ENCODE measurements at regions of chr7 and their contacts with region 1.

Region 1: DNA sequence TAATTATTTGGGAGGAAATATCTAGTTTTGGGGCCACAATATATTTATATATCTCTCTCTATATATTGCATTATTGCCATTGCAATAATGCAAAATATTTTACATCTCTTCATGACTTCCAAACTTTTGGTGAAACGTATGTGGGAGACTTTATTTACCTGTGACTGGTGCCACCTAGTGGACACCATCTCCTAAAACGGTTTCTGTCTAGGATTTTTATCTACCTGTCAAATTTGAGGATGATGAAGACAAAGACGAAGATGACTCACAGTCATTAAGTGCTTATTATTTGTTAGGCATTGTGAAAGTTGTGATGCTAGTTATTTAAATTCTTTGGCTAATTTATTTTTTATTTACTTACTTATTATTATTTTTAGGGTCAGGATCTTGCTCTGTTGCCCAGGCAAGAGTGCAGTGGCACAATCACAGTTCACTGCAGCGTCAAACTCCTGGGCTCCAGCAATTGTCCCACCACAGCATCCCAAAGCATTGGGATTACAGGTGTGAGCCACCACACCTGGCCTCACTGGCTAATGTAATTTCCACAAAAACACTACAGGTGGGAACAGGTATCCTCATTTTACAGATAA is 18.7 kb upstream of the CBLL1 start:
- DNase-seq: peak in 3 of 6 donors; percentile 4 to 45 (median 22)
- ATAC-seq: peak; percentile 46 to 73 (median 68)
- H3K4me3 ChIP-seq: no peak overlapping the region
- H3K27ac ChIP-seq: no peak overlapping the region
- H3K4me1 ChIP-seq: no peaks in the 10 kb centered on the region
- H3K27me3 ChIP-seq: no peaks in the 10 kb centered on the region
- CTCF ChIP-seq: peak; percentile 24 to 68 (median 41)

Region 2: GRCh38 chr7:106806556-106806955 is 918.7 kb before region 1 on chr7:
- intact Hi-C with region 1: loop called in 1 of 3 experiments (anchors 10 kb)
- DNase-seq: no peak
- ATAC-seq: no peak
- H3K4me3 ChIP-seq: no peak overlapping the region
- H3K27ac ChIP-seq: no peak overlapping the region
- H3K4me1 ChIP-seq: no peaks in the 10 kb centered on the region
- H3K27me3 ChIP-seq: no peaks in the 10 kb centered on the region
- CTCF ChIP-seq: no peak

Region 3: GRCh38 chr7:107327957-107328569 is 397.2 kb before region 1 on chr7:
- intact Hi-C with region 1: no loop called
- DNase-seq: no peak
- ATAC-seq: no peak
- H3K4me3 ChIP-seq: no peak overlapping the region
- H3K27ac ChIP-seq: no peak overlapping the region
- H3K4me1 ChIP-seq: peaks cover 0 to 7% (median 0%) of the 10 kb centered on the region in 3 donors
- H3K27me3 ChIP-seq: no peaks in the 10 kb centered on the region
- CTCF ChIP-seq: no peak

Region 4: GRCh38 chr7:107462740-107463444 is 262.4 kb before region 1 on chr7:
- intact Hi-C with region 1: loop called in 2 of 3 experiments (anchors 5 kb)
- DNase-seq: peak in 5 of 6 donors; percentile 37 to 60 (median 41)
- ATAC-seq: peak; percentile 88 to 99 (median 98)
- H3K4me3 ChIP-seq: no peak overlapping the region
- H3K27ac ChIP-seq: no peak overlapping the region
- H3K4me1 ChIP-seq: no peaks in the 10 kb centered on the region
- H3K27me3 ChIP-seq: no peaks in the 10 kb centered on the region
- CTCF ChIP-seq: peak in 3 of 4 donors; percentile 40 to 50 (median 46)

Region 5: GRCh38 chr7:107469929-107470328 is 255.3 kb before region 1 on chr7 and contains the start of gene GPR22:
- intact Hi-C with region 1: loop called in 1 of 3 experiments (anchors 5 kb)
- DNase-seq: no peak
- ATAC-seq: no peak
- H3K4me3 ChIP-seq: no peak within 1 kb of the TSS
- H3K27ac ChIP-seq: no peak within 1 kb of the TSS
- H3K4me1 ChIP-seq: no peaks in the 10 kb centered on the region
- H3K27me3 ChIP-seq: no peaks in the 10 kb centered on the region
- CTCF ChIP-seq: no peak
- total RNA-seq, gene GPR22: not detected

Region 6: GRCh38 chr7:107570298-107570697 is 154.9 kb before region 1 on chr7:
- intact Hi-C with region 1: no loop called
- DNase-seq: no peak
- ATAC-seq: no peak
- H3K4me3 ChIP-seq: no peak overlapping the region
- H3K27ac ChIP-seq: no peak overlapping the region
- H3K4me1 ChIP-seq: peaks cover 0 to under 1% (median 0%) of the 10 kb centered on the region in 3 donors
- H3K27me3 ChIP-seq: no peaks in the 10 kb centered on the region
- CTCF ChIP-seq: no peak

Region 7: DNA sequence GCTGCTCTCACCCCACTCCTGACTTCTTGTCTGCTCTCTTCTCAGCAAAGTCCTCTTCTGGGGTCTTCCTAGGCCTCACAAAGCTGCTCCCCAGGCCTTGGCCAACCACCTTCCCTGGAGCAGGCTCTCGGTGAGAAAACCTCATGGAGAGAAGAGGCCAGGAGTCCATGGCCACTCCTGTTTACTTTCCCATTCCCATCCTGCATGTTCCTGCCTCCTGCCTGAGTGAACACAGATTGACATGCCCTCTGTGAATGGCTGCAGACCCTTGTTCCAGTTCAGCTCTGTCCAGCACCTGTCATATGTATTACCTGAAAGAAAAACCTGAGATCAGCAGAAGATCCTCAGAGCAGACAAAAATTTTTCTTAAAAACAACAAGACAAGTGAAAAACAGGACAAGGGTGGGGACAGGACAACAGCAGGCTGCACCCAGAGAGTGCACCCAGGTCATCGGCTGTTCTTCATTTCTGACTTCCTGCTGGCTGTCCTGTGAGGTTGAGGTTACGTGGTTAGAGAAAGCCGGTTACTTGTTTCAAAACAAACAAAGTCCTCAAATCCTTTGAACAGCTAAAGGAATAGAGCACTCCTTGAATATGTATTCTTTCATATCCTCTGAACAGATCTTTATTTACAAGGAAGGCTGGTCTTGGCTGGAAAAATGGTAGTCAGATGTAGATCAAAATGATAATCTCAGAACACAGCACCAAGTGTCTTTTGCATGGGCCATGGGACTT is 131.7 kb after region 1 on chr7:
- intact Hi-C with region 1: no loop called
- DNase-seq: no peak
- ATAC-seq: peak; percentile 4 to 53 (median 32)
- H3K4me3 ChIP-seq: no peak overlapping the region
- H3K27ac ChIP-seq: peak overlapping the region in 1 of 4 donors; percentile 7
- H3K4me1 ChIP-seq: peaks cover 15 to 17% (median 15%) of the 10 kb centered on the region in 3 donors
- H3K27me3 ChIP-seq: no peaks in the 10 kb centered on the region
- CTCF ChIP-seq: no peak

Region 8: GRCh38 chr7:108078211-108078673 is 353.0 kb after region 1 on chr7:
- intact Hi-C with region 1: no loop called
- DNase-seq: no peak
- ATAC-seq: no peak
- H3K4me3 ChIP-seq: no peak overlapping the region
- H3K27ac ChIP-seq: no peak overlapping the region
- H3K4me1 ChIP-seq: no peaks in the 10 kb centered on the region
- H3K27me3 ChIP-seq: no peaks in the 10 kb centered on the region
- CTCF ChIP-seq: no peak

Measured in pancreas (tissue), 10 donors.